ENCODE measurements at regions of chr9 and their contacts with region 1.

Region 1: DNA sequence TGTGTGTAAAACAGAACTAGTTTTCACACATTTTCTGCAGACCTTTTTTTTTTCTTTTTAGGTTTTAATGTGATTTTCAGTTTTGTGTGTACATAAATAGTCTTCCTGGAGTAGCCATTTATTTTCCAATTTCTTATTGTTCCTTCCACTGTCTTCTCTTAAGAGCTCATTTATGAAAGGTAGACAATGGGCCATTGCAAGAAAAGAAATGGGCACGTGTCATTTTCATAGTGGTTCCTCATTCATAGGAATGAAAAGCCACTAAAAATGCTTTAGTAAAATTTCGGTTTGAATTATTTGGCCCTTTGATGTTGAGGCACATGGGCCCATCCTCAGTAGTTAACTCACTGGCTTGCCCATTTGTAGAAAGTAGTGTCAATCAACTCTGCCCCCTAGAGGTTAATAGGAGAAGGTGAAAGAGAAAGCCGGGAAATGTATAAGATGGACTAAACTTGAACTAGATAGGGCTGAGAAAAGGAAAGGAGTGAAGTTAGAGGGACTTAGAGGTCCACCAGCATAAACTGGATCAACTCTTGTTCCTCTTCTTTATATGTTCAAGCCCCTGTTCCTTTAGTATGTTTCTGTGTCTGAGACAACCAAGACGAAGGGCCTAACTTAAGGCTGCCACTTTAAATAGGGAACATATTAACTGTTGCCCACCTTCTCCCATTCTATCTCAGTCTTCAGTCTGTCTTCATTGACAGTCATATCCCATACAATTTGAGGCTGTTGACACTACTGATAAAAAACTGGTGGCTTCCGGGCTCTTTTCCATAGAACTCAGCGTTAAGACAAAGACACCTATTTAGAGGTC is 72.6 kb downstream of the SMARCA2 start:
- DNase-seq: peak; percentile 37
- H3K4me3 Mint-ChIP-seq: no peak overlapping the region
- H3K27ac Mint-ChIP-seq: peak overlapping the region; percentile 74
- H3K4me1 Mint-ChIP-seq: peaks cover 28% of the 10 kb centered on the region
- H3K27me3 Mint-ChIP-seq: no peaks in the 10 kb centered on the region

Region 2: DNA sequence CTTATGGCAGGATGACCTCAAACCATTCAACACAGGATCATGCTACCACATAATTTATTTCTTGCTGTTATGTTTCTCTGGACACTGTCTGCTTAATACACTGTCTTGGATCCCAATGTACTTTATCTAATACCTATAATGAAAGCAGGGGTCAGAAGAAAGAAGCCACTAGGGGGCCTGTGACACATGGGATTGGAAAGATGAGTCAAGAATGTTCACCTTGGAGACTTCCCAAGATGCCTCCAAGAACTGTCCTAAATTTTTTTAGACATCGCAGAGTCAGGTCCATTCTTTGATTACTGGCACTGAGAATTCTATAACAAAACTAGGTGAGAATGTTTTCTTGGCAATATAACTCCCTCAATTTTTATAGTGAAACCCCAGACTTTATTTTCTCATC is 378.4 kb before region 1 on chr9:
- CTCF ChIA-PET with region 1: no interaction called
- POLR2A ChIA-PET with region 1: no interaction called
- intact Hi-C with region 1: loop called (anchors 1 kb)
- DNase-seq: no peak
- H3K4me3 Mint-ChIP-seq: no peak overlapping the region
- H3K27ac Mint-ChIP-seq: no peak overlapping the region
- H3K4me1 Mint-ChIP-seq: no peaks in the 10 kb centered on the region
- H3K27me3 Mint-ChIP-seq: peaks cover 6% of the 10 kb centered on the region

Region 3: DNA sequence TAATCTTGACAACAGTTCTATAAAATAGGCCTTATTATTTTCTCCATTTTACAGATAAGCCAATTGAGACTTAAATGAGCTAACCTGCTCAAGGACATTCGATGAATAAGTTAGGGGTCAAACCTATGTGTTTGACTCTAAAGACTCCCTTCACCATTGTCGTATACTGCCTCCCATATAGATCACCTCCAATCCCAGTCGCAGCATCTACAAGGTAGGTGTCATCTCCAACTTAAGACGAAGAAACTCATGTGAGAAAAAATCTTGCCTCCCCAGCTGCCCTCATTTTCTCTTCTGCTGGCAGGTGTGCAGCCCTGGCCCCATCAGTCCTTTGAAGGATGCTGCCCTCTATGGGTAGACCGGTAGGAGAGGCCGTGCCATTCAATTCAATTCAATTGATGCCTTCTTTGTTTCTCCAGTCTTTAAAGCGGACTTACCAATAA is 147.8 kb before region 1 on chr9:
- CTCF ChIA-PET with region 1: interaction called, 11 read pairs
- POLR2A ChIA-PET with region 1: no interaction called
- intact Hi-C with region 1: loop called (anchors 5 kb)
- DNase-seq: peak; percentile 52
- H3K4me3 Mint-ChIP-seq: no peak overlapping the region
- H3K27ac Mint-ChIP-seq: no peak overlapping the region
- H3K4me1 Mint-ChIP-seq: peaks cover 3% of the 10 kb centered on the region
- H3K27me3 Mint-ChIP-seq: peaks cover 9% of the 10 kb centered on the region

Region 4: DNA sequence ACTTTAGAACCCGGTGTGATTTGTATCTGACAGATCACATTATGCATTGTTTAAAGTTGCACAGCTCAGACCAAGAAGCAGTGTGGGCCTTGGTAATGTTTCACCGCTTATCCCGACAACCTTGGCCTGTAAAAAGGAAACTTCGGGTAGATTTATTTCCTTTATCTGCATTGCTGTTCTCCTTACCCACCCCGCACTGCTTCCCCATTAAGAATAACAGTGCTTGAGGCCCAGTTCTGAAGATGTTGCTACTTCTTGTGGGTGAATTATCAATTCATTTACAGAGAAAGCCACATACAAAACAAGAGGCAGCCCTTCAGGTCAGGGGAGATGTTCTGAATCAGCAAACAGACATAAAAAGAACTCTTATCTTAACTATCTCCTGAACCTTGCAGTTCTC is 64.2 kb before region 1 on chr9:
- CTCF ChIA-PET with region 1: interaction called, 6 read pairs
- POLR2A ChIA-PET with region 1: no interaction called
- intact Hi-C with region 1: loop called (anchors 2 kb)
- DNase-seq: peak; percentile 53
- H3K4me3 Mint-ChIP-seq: peak overlapping the region; percentile 38
- H3K27ac Mint-ChIP-seq: peak overlapping the region; percentile 86
- H3K4me1 Mint-ChIP-seq: peaks cover 94% of the 10 kb centered on the region
- H3K27me3 Mint-ChIP-seq: no peaks in the 10 kb centered on the region

Region 5: GRCh38 chr9:2066312-2067273 is 21.1 kb before region 1 on chr9:
- CTCF ChIA-PET with region 1: interaction called, 16 read pairs
- POLR2A ChIA-PET with region 1: no interaction called
- intact Hi-C with region 1: no loop called
- DNase-seq: no peak
- H3K4me3 Mint-ChIP-seq: no peak overlapping the region
- H3K27ac Mint-ChIP-seq: peak overlapping the region; percentile 51
- H3K4me1 Mint-ChIP-seq: peaks cover 24% of the 10 kb centered on the region
- H3K27me3 Mint-ChIP-seq: no peaks in the 10 kb centered on the region

Region 6: GRCh38 chr9:2336055-2336454 is 248.3 kb after region 1 on chr9:
- CTCF ChIA-PET with region 1: no interaction called
- POLR2A ChIA-PET with region 1: no interaction called
- intact Hi-C with region 1: no loop called
- DNase-seq: no peak
- H3K4me3 Mint-ChIP-seq: no peak overlapping the region
- H3K27ac Mint-ChIP-seq: no peak overlapping the region
- H3K4me1 Mint-ChIP-seq: no peaks in the 10 kb centered on the region
- H3K27me3 Mint-ChIP-seq: no peaks in the 10 kb centered on the region